ENCODE measurements at regions of chr5 and their contacts with region 1.

Region 1: GRCh38 chr5:167587772-167588437 is 703.5 kb upstream of the WWC1 start:
- DNase-seq: no peak
- H3K4me3 ChIP-seq: no peak overlapping the region
- H3K27ac ChIP-seq: no peak overlapping the region
- H3K4me1 ChIP-seq: no peaks in the 10 kb centered on the region
- H3K27me3 ChIP-seq: no peaks in the 10 kb centered on the region
- CTCF ChIP-seq: peak in 1 of 2 donors; percentile 13
- POLR2A ChIP-seq: no peak

Region 2: GRCh38 chr5:167261309-167262100 is 326.4 kb before region 1 on chr5:
- CTCF ChIA-PET with region 1: no interaction called
- POLR2A ChIA-PET with region 1: no interaction called
- dilution Hi-C with region 1: no loop called
- intact Hi-C with region 1: loop called (anchors 5 kb)
- DNase-seq: no peak
- H3K4me3 ChIP-seq: no peak overlapping the region
- H3K27ac ChIP-seq: no peak overlapping the region
- H3K4me1 ChIP-seq: no peaks in the 10 kb centered on the region
- H3K27me3 ChIP-seq: no peaks in the 10 kb centered on the region
- CTCF ChIP-seq: peak; percentile 17
- POLR2A ChIP-seq: no peak